ENCODE measurements at regions of chr1 and their contacts with region 1.

Region 1: DNA sequence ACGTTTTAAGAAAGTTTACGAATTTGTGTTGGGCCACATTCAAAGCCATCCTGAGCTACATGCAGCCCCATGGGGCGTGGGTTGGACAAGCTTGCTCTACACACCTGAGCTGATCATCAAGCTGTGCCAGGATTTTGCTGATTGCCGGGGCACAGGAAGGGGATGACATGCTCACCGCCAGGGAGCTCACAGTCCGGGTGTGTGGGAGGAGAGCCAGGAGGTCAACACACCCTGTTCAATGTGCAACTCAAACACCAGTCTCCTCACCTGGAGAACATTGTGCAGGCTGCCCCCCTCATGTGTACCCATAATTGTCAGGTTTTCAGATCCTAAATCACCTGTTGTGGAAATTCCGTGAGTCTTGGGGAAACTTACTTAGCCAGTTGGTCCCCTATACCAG is 969 bp downstream of the CYP4A11 start:
- DNase-seq: no peak
- ATAC-seq: peak; percentile 95
- H3K4me3 ChIP-seq: no peak overlapping the region
- H3K27ac ChIP-seq: no peak overlapping the region
- H3K4me1 ChIP-seq: peaks cover 27% of the 10 kb centered on the region
- H3K27me3 ChIP-seq: no peaks in the 10 kb centered on the region; a peak in 1 of 5 replicates
- CTCF ChIP-seq: no peak
- EP300 ChIP-seq: no peak
- POLR2A ChIP-seq: no peak
- RAD21 ChIP-seq: no peak

Region 2: GRCh38 chr1:46747683-46748288 is 192.5 kb before region 1 on chr1:
- CTCF ChIA-PET with region 1: no interaction called
- POLR2A ChIA-PET with region 1: no interaction called
- in situ Hi-C with region 1: no loop called
- intact Hi-C with region 1: loop called (anchors 10 kb)
- DNase-seq: peak; percentile 49
- ATAC-seq: peak; percentile 99
- H3K4me3 ChIP-seq: no peak overlapping the region
- H3K27ac ChIP-seq: no peak overlapping the region
- H3K4me1 ChIP-seq: no peaks in the 10 kb centered on the region
- H3K27me3 ChIP-seq: no peaks in the 10 kb centered on the region
- CTCF ChIP-seq: peak; percentile 74
- EP300 ChIP-seq: no peak
- POLR2A ChIP-seq: no peak
- RAD21 ChIP-seq: no peak

Region 3: DNA sequence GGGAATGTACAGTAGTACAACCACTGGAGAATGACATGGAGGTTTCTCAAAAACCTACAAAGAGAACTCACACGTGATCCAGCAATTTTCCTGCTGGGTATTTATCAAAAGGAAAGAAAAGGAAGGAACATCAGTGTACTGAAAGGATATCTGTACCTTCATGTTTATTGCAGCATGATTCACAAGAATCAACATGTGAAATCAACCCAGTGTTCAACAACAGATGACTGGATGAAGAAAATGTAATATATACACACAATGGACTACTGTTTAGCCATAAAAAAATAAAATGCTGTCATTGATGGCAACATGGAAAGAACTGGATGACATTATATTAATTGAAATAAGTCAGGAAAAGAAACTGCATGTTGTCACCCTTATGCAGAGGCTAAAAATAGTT is 19.9 kb after region 1 on chr1:
- CTCF ChIA-PET with region 1: no interaction called
- POLR2A ChIA-PET with region 1: no interaction called
- in situ Hi-C with region 1: no loop called
- intact Hi-C with region 1: no loop called
- DNase-seq: no peak
- ATAC-seq: no peak
- H3K4me3 ChIP-seq: no peak overlapping the region
- H3K27ac ChIP-seq: no peak overlapping the region
- H3K4me1 ChIP-seq: no peaks in the 10 kb centered on the region
- H3K27me3 ChIP-seq: no peaks in the 10 kb centered on the region
- CTCF ChIP-seq: no peak
- EP300 ChIP-seq: no peak
- POLR2A ChIP-seq: no peak
- RAD21 ChIP-seq: no peak

Region 4: DNA sequence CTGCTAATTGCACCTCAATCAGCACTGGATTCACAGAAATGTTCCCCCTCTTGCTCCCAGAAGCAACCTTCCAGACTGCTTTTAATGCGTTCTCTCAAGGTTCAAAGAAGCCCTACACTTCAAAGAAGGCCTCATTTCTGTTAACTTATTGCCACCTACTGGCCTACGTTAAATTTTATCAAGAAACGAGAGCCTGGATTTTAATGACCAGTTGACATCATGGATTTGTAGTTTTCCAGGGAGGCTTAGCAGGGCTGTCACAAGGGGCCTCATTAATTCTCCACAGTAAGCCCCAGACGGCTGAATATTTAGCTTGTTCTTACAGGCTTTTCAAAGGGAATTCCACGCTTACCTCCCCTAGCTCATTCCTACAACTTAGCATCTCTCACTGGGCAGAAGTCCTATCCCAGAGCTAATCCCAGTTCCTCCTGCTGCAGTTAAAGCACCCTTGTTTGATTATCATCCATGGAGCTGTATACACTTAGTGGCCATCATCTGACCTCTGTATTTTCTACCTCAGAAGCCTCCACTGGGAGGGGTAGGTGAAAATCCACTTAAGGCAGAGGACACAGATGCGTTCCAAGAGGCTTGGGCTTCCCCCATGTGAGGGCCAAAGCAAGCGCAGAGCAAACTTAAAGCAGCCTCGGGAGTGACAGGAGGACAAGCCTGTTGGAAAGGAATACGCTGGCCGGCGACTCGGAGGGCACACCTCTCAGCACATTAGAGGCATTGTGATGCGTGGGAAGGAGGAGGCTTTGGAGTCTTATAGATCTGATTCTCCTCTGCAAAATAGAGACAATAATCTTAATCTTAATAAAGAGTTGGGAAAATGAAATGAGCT is 51.0 kb after region 1 on chr1:
- CTCF ChIA-PET with region 1: no interaction called
- POLR2A ChIA-PET with region 1: no interaction called
- in situ Hi-C with region 1: no loop called
- intact Hi-C with region 1: loop called (anchors 2 kb)
- DNase-seq: peak; percentile 33
- ATAC-seq: peak; percentile 65
- H3K4me3 ChIP-seq: no peak overlapping the region
- H3K27ac ChIP-seq: no peak overlapping the region
- H3K4me1 ChIP-seq: no peaks in the 10 kb centered on the region
- H3K27me3 ChIP-seq: no peaks in the 10 kb centered on the region; a peak in 1 of 5 replicates
- CTCF ChIP-seq: peak; percentile 67
- EP300 ChIP-seq: no peak
- POLR2A ChIP-seq: no peak
- RAD21 ChIP-seq: no peak; the same call in 1 of the 2 replicates

Region 5: DNA sequence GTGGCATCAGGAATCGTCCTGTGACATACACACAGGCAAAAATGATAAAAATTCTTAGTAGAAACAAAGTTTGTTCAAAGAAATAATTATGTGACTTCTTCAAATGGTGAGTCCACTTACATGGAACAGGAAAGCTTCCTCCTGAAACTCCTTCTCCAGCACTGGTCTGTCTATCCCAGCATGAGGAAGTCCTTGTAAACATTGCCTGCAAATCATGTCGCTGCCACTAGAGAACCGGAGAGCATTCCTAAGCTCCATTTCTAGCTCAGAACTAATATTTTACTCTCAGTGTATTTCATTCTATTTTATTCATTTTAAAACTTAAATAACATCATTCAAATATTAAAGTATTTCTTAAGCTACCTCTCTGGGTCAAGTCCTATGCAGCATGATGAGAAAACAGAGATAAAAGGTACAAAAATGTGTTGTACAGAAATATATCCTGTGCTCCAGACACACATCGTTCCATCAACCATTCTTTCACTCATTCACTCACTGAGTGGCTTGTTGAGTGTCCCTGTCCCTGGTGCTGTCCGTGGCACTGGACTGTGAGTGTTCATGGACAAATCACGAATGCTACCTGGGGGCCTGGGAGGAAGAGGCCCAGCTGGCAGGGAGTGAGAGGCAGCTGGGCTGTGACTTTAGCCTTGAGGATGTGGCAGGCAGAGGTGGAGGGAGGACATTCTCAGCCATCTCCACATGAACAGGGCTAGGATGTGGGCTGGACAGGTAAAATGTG is 206.9 kb after region 1 on chr1:
- CTCF ChIA-PET with region 1: no interaction called
- POLR2A ChIA-PET with region 1: no interaction called
- in situ Hi-C with region 1: loop called (anchors 25 kb)
- intact Hi-C with region 1: loop called (anchors 10 kb)
- DNase-seq: no peak
- ATAC-seq: peak; percentile 49; the same call in 1 of the 3 replicates
- H3K4me3 ChIP-seq: no peak overlapping the region
- H3K27ac ChIP-seq: no peak overlapping the region
- H3K4me1 ChIP-seq: no peaks in the 10 kb centered on the region
- H3K27me3 ChIP-seq: no peaks in the 10 kb centered on the region
- CTCF ChIP-seq: no peak
- EP300 ChIP-seq: no peak
- POLR2A ChIP-seq: no peak
- RAD21 ChIP-seq: no peak